ENCODE measurements at regions of chr6 and their contacts with region 1.

Region 1: GRCh38 chr6:75748743-75749501 is at the start of gene MYO6:
- DNase-seq: peak; percentile 59 to 89 (median 75)
- H3K4me3 ChIP-seq: peak within 1 kb of the TSS; percentile 68 to 100 (median 95)
- H3K27ac ChIP-seq: peak within 1 kb of the TSS in 58 of 59 donors; percentile 69 to 97 (median 90)
- H3K27me3 ChIP-seq: no peaks in the 10 kb centered on the region
- CTCF ChIP-seq: peak in 7 of 56 donors; percentile 9 to 36 (median 22)
- total RNA-seq, gene MYO6: 37.6 to 112 (median 66.2) TPM

Region 2: GRCh38 chr6:75794954-75795739 is 46.2 kb after region 1 on chr6:
- intact Hi-C with region 1: loop called in 1 of 2 experiments (anchors 2 kb)
- DNase-seq: no peak
- H3K4me3 ChIP-seq: peak overlapping the region in 52 of 59 donors; percentile 1 to 55 (median 28)
- H3K27ac ChIP-seq: peak overlapping the region; percentile 46 to 97 (median 89)
- H3K27me3 ChIP-seq: no peaks in the 10 kb centered on the region
- CTCF ChIP-seq: no peak

Region 3: DNA sequence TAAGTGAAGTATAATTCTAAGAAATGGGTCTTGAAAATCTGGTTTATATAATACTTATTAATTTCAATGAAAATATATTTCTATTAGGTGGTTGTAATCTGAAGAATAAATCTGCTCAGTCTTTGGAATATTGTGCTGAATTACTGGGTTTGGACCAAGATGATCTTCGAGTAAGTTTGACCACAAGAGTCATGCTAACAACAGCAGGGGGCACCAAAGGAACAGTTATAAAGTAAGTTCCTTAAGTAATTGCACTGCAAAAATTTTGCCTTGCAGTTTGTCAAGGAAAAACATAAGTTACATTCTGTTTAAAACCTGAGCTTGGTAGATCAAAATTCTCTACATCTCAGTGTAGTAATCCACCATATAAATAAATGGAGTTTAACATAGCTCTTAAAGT is 106.1 kb after region 1 on chr6:
- intact Hi-C with region 1: loop called in 1 of 2 experiments (anchors 2 kb)
- DNase-seq: peak in 3 of 10 donors; percentile 22 to 53 (median 48)
- H3K4me3 ChIP-seq: no peak overlapping the region
- H3K27ac ChIP-seq: no peak overlapping the region
- H3K27me3 ChIP-seq: no peaks in the 10 kb centered on the region
- CTCF ChIP-seq: peak; percentile 19 to 77 (median 58)